AG04449 (cell line): ENCODE measurements at regions of chr3 and their contacts with region 1.

Region 1: DNA sequence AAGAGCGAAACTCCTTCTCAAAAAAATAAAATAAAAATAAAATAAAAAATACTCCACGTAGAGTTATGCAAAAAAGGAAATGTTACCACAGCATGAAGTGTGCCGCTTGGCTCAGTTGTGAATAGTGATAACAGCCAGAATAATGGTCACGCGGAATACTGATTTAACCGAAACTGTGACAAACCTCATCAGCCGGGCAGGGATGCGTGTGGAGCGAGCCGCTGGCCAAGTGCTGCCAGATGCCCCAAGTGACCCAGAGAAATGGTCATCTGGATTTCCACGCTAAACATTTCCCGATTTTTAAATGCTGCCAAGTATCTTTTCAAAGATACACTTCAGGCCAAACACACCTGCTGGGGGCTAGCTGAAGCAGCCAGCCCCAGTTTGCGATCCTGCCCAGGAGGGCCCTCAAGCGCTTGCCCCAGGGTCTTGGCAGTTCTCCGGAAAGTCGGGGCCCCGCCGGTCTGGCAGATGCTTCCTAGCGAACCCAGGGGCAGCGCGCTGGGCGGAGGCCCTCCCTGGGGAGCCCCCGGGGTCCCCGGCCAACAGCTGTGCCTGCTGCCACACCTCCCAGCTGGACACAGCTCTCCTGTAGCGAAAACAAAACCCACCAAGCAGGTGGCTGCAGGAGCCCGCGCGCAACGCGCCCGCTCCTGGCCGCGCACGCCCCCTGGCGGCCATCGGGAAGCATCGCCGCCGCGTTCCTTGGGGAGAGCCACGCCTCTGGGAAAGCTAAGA is 35.1 kb downstream of the CMTM6 start:
- DNase-seq: no peak
- H3K4me3 ChIP-seq: no peak overlapping the region
- CTCF ChIP-seq: peak; percentile 96

Region 2: DNA sequence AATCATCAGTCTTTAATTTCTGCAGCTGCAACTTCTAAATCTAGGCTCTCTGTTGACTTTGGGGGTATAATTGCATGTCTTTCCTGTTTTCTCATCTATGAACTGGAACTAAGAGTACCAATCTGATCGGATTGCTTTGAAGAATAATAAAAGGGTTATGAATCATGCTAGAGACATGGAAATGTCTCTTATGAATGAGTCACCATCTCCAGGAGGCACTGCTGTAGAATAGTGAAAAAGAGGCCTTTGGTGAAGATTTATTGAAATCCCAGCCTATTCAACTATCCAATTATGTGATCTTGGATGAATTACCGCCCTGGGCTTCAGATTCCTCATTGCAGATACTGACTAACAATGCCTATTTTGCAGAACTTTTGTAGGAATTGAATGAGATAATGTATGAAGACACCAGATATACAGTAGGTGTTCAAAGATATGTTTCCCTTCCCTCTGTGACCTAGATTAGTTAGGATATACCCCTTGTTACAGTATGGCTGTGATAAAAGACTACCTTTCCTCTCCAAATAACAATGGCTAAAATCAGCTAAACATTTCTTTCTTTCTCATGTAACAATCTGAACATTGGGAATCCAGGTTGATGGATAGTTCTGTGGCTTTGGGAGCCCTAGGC is 240.5 kb before region 1 on chr3:
- CTCF ChIA-PET with region 1: no interaction called
- POLR2A ChIA-PET with region 1: no interaction called
- DNase-seq: no peak
- H3K4me3 ChIP-seq: no peak overlapping the region
- CTCF ChIP-seq: no peak

Region 3: GRCh38 chr3:32374788-32375595 is 92.5 kb before region 1 on chr3:
- CTCF ChIA-PET with region 1: interaction called, 184 read pairs
- POLR2A ChIA-PET with region 1: no interaction called
- DNase-seq: peak; percentile 34
- H3K4me3 ChIP-seq: no peak overlapping the region
- CTCF ChIP-seq: peak; percentile 56

Region 4: DNA sequence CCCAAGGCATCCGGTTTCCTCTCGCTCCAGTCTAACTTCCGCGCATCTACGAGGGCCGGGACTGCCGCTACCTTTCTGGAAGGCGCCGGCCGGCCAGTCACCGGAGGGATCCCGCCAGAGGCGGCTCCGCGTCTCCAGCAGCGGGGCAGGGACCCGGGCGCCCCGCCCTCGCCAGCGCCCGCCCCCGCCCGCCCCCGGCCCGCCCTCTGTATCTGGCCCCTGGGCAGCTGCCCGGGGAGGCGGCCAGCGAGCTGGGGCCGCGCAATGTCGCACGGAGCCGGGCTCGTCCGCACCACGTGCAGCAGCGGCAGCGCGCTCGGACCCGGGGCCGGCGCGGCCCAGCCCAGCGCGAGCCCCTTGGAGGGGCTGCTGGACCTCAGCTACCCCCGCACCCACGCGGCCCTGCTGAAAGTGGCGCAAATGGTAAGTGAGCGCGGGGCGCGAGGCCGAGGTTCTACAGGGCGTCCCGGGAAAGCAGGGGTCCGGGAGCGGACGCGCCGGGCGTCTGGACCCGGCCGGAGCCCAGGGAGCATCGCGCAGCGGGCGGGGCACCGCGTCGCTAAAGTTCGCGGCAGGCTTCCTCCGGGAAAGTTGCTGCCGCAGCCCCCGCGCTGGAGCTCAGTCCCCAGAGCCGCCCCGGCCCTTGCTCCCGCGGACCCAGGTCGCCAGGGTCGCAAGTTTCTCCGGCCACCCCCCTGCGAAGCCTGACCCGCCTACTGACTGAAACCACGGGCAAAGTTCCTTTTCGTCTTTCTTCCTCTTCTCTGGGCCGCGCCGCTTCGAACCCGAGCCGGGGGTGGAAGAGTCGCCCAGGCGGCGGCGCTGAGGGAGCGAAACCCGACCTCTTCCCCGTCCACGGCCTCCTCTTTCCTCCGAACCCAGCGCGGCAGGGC is 75.6 kb before region 1 on chr3 and contains the start of gene CMTM7:
- CTCF ChIA-PET with region 1: interaction called, 30 read pairs
- POLR2A ChIA-PET with region 1: no interaction called
- DNase-seq: no peak
- H3K4me3 ChIP-seq: peak within 1 kb of the TSS; percentile 74
- CTCF ChIP-seq: no peak

Region 5: DNA sequence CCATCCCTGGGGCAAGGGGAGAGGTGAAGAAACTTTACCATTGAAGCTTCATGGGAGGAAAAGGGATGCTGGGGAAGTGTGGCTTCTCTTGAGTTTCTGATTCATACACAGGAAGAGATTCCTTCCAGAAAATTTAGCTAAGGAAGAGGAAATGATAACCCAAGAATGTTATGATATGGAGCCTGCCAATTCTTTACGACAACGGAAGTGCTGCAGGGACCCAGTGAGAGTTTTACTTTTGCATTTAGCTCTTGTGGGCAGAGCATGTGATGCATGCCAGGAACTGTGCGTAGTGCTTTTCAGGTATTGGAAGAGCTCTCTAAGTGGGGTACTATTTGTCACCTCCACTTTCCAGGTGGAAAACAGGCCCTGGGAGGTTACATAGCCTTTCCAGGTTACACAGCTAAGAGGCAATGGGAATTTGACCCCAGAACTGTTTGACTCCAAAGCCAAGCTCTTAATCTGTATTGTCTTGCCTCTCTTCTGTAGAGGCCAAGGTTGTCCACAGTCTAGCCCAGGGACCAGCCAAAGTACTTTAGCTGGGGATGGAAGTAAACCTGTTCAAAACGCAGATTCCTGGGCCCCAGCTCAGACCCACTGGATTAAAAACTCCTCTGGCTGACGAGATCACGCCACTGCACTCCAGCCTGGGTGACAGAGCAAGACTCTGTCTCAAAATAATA is 52.8 kb before region 1 on chr3:
- CTCF ChIA-PET with region 1: interaction called, 10 read pairs
- POLR2A ChIA-PET with region 1: no interaction called
- DNase-seq: no peak
- H3K4me3 ChIP-seq: no peak overlapping the region
- CTCF ChIP-seq: no peak

Region 6: GRCh38 chr3:32438596-32439344 is 28.7 kb before region 1 on chr3:
- CTCF ChIA-PET with region 1: interaction called, 11 read pairs
- POLR2A ChIA-PET with region 1: no interaction called
- DNase-seq: no peak
- H3K4me3 ChIP-seq: no peak overlapping the region
- CTCF ChIP-seq: no peak

Region 7: GRCh38 chr3:32502118-32502945 is 34.8 kb after region 1 on chr3 and contains the start of gene CMTM6:
- CTCF ChIA-PET with region 1: interaction called, 15 read pairs
- POLR2A ChIA-PET with region 1: no interaction called
- DNase-seq: peak; percentile 21
- H3K4me3 ChIP-seq: peak within 1 kb of the TSS; percentile 89
- CTCF ChIP-seq: no peak

Region 8: DNA sequence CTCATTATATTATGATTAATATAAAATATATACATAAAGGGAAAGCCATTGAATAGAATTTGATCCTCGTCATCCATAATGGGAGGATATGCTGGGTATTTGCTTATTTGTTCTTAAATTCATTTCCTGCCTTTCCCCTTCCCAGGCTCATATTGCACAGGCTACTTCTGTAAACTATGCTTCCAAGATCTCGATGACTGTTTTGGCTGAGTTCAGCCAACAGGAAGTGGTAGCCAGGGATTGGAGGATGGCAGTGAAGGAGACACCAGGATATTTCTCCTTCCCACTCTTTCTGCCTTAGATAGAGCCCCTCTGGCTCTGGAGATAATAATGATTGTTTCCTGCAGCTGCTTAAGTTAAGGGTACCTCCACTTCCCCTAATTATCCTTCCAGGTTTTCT is 147.5 kb after region 1 on chr3:
- CTCF ChIA-PET with region 1: no interaction called
- POLR2A ChIA-PET with region 1: no interaction called
- DNase-seq: peak; percentile 7
- H3K4me3 ChIP-seq: no peak overlapping the region
- CTCF ChIP-seq: no peak